ENCODE measurements at regions of chr6 and their contacts with region 1.

Region 1: DNA sequence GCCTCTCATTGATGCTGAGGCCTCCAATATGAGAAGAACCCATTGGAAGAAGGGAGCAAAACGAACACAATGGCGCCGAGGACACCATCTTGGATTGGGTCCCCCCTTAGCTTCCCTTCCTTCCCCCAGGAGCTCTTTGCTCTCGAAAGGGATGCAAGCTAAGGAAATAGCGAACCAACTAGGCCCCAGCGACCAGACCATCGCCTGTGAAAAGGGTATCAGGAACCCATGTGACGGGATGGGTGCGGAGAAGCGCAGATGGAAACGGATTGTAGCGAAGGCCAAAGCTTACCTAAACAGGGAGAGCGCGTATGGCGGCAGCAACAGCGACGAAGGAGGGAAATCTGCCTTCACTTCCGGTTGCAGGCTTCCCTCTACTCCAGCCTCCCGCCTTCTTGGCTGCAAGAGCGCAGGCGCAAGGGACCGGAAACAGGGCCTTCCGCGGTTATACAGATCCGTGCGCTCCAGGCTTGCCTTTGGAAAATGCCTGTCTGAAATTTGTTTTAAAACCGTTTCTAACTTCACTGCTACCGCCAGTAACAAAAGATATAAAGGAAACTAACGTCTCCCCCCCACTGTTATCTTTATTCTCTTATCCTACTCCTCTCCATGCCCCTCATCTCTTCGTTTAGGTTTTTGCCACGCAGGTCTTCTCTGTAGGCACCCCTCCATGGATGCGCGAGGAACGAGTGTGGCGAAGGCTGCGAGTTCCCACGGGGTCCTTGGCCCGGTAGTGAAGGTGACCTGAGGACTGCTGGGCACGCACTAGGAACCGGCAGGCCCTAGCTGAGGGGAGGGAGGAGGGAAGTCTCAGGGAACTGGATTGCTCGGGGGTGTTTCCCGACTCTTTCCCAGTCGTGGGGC is at the start of gene DDX39B:
- DNase-seq: peak; percentile 98
- total RNA-seq, gene DDX39B: 201 TPM

Region 2: DNA sequence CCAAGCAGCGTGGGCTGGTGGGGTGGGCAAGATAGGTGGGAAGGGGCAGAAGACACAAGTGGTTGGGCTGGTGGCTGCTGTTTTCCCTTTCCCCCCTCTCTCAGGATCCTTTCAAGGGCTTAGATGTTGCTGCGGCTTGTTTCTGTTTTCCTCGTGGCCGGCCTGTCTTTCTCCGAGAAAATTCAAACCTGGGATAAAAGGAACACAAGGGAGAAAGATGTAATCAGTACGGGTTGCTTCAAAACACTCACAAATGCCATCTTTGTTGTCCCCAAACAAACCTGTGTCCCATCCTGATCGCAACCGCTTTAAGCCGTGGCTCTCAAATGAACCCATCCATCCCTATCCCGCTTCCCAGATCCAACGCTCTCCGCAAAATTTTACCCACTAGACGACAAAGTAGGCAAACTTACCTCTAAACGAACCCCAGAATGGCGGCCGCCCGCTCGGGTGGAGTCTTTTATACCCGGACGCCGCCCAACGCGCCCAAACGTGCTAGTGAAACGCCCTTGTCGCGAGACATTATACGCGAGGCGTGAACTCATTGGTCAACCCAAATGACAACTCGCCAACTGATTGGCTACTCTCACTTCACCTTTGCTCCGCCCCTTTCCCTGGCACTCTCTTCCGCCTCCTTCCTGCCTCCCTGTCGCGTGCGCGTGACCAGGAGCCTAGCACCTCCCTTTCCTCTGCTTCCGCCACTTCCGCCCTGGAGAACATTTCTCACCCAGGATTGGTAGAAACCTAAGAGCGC is 924.9 kb before region 1 on chr6 and contains the start of gene PPP1R10:
- intact Hi-C with region 1: loop called (anchors 5 kb)
- DNase-seq: peak; percentile 99
- total RNA-seq, gene PPP1R10: 30.0 TPM

Region 3: GRCh38 chr6:31493875-31494694 is 47.8 kb before region 1 on chr6:
- intact Hi-C with region 1: loop called (anchors 2 kb)
- DNase-seq: peak; percentile 94

Region 4: DNA sequence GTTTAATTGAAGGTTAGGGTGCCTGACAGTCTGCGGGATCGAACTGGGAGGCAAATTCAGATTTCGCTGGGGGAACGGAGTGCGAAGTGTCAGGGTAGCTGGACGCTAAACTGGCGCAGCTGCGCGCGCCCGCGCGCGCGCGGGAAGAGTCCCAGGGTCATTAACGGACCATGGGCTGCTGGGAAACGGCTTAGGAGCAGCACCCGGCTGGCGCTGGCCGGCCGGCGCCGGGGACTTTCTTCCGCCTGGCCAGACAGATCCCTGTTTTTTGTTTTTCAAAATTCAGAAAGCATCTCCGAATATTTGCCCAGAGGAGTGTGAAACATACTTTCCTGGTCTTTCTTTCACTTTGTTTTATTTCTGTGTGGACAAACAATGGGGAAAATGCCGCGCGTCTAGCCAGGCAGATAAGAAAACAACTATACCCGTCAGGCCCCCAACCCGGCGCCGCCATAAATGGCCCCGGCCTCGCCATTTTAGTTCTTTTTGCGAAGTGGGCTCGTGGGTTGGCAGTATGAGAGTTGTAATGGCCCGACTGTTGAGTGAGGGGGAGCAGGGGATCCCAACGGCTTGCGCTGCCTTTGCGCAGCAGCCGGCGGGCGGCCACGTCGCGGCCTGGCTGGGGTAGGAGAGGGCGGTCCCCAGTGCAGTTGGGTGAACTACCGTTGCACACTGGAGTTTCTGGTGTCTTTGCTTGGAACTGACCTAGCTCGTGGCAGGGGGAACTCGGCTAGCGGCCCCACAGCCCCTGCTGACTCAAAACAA is 292.7 kb after region 1 on chr6:
- intact Hi-C with region 1: loop called (anchors 10 kb)
- DNase-seq: peak; percentile 93

Region 5: GRCh38 chr6:31958741-31959739 is 417.1 kb after region 1 on chr6 and contains the starts of genes NELFE and SKIC2:
- intact Hi-C with region 1: loop called (anchors 10 kb)
- DNase-seq: peak; percentile 100
- total RNA-seq, gene NELFE: 46.7 TPM
- total RNA-seq, gene SKIC2: 33.2 TPM